Activated CD4-positive, alpha-beta T cell treated with anti-CD3 and anti-CD28 coated beads for 36 hours (primary cell): ENCODE measurements at regions of chr20 and their contacts with region 1.

Region 1: DNA sequence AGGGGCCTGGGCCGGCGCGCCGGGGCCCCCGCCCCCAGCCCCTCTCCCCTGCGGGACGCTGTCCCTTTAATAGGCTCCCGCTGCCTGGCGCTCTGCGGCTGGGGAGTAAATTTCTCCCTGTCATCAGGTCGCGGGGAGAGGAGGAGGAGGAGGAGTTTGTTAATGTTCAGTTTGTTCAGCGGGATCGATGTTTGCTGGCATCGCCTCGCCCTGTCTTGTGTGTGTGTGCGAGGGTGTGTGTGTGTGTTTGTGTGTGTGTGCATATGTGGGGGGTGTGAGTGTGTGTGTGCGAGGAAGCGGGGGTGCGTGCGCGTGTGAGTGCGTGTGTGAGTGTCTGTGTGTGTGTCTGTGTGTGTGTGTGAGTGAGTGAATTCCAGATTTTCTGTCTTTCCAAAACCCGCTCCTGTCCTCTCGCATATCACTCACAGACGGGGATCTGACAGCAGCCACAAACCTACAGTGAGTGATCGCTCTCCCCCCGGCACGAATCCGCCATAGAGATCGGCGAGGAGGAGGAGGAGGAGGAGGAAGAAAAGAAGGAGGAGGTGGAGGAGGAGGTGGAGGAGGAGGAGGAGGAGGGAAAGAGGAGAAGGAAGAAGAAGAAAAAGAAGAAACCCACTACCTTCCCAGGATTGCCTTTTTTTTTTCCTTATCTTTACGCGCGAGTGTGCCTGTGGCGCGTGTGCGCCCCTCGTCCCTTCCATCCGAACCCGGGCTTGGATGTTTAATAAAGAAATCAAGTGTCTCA is at the start of gene TSHZ2:
- DNase-seq: peak; percentile 75
- ATAC-seq: peak; percentile 49
- H3K4me3 Mint-ChIP-seq: peak within 1 kb of the TSS; percentile 79
- H3K27ac Mint-ChIP-seq: peak within 1 kb of the TSS; percentile 94
- H3K4me1 Mint-ChIP-seq: peaks cover 41% of the 10 kb centered on the region
- H3K27me3 Mint-ChIP-seq: peaks cover 8% of the 10 kb centered on the region
- total RNA-seq, gene TSHZ2: 25.9 to 43.6 TPM

Region 2: DNA sequence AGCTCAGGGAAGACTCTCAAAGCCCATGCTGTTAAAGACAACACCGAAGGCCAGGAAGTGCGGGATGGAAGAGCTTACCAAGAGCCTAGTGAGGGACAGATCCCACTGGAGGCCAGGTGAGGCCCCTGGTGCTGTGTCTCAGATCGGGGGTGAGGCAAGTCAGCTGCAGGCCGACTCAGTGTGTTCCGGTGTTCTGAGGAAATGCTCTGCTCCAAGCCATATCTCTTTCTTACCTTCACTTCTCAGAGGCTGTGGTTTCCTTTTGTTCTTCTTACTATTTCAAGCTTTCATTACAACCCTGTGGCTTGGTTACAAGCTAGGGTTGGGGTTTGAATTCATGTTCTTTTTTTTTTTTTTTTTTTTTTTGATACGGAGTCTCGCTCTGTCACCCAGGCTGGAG is 666.5 kb before region 1 on chr20:
- CTCF ChIA-PET with region 1: no interaction called
- POLR2A ChIA-PET with region 1: no interaction called
- intact Hi-C with region 1: loop called in 1 of 2 experiments (anchors 10 kb)
- DNase-seq: peak; percentile 49
- ATAC-seq: peak; percentile 87
- H3K4me3 Mint-ChIP-seq: no peak overlapping the region
- H3K27ac Mint-ChIP-seq: peak overlapping the region; percentile 45
- H3K4me1 Mint-ChIP-seq: peaks cover 56% of the 10 kb centered on the region
- H3K27me3 Mint-ChIP-seq: no peaks in the 10 kb centered on the region

Region 3: DNA sequence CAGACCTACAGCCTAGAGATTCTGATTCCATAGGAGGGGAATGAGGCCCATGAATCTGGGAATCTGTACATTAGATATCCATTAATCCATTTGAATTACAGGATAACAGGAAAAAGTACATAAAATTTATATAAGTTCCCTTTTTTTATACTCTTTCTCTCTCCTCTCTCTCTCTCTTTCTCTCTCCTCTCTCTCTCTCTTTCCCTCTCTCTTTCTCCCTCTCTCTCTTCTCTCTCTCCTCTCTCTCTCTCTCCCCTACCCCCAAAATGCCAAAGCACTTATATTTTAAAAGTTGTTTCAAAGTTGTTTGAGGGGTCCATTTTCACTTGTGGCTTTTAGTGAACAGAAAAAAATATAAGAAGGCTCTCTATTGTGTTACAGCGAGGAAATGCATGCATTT is 14.9 kb after region 1 on chr20:
- CTCF ChIA-PET with region 1: no interaction called
- POLR2A ChIA-PET with region 1: no interaction called
- intact Hi-C with region 1: no loop called
- DNase-seq: no peak
- ATAC-seq: no peak
- H3K4me3 Mint-ChIP-seq: no peak overlapping the region
- H3K27ac Mint-ChIP-seq: no peak overlapping the region
- H3K4me1 Mint-ChIP-seq: peaks cover 20% of the 10 kb centered on the region
- H3K27me3 Mint-ChIP-seq: no peaks in the 10 kb centered on the region

Region 4: GRCh38 chr20:53001498-53002301 is 29.3 kb after region 1 on chr20:
- CTCF ChIA-PET with region 1: interaction called, 4 read pairs
- POLR2A ChIA-PET with region 1: interaction called, 19 read pairs
- intact Hi-C with region 1: loop called (anchors 1 to 2 kb)
- DNase-seq: peak; percentile 49
- ATAC-seq: peak; percentile 72
- H3K4me3 Mint-ChIP-seq: peak overlapping the region; percentile 65
- H3K27ac Mint-ChIP-seq: peak overlapping the region; percentile 99
- H3K4me1 Mint-ChIP-seq: peaks cover 82% of the 10 kb centered on the region
- H3K27me3 Mint-ChIP-seq: no peaks in the 10 kb centered on the region

Region 5: GRCh38 chr20:53070706-53071392 is 98.5 kb after region 1 on chr20:
- CTCF ChIA-PET with region 1: interaction called, 5 read pairs
- POLR2A ChIA-PET with region 1: interaction called, 11 read pairs
- intact Hi-C with region 1: loop called (anchors 1 to 2 kb)
- DNase-seq: peak; percentile 64
- ATAC-seq: peak; percentile 77
- H3K4me3 Mint-ChIP-seq: peak overlapping the region; percentile 24
- H3K27ac Mint-ChIP-seq: peak overlapping the region; percentile 93
- H3K4me1 Mint-ChIP-seq: peaks cover 54% of the 10 kb centered on the region
- H3K27me3 Mint-ChIP-seq: peaks cover 3% of the 10 kb centered on the region

Region 6: GRCh38 chr20:53138454-53139262 is 166.3 kb after region 1 on chr20:
- CTCF ChIA-PET with region 1: no interaction called
- POLR2A ChIA-PET with region 1: no interaction called
- intact Hi-C with region 1: loop called in 1 of 2 experiments (anchors 2 kb)
- DNase-seq: peak; percentile 46
- ATAC-seq: peak; percentile 89
- H3K4me3 Mint-ChIP-seq: no peak overlapping the region
- H3K27ac Mint-ChIP-seq: peak overlapping the region; percentile 69
- H3K4me1 Mint-ChIP-seq: peaks cover 41% of the 10 kb centered on the region
- H3K27me3 Mint-ChIP-seq: peaks cover 4% of the 10 kb centered on the region

Region 7: GRCh38 chr20:53202777-53203176 is 230.4 kb after region 1 on chr20:
- CTCF ChIA-PET with region 1: no interaction called
- POLR2A ChIA-PET with region 1: no interaction called
- intact Hi-C with region 1: loop called in 1 of 2 experiments (anchors 5 kb)
- DNase-seq: no peak
- ATAC-seq: peak; percentile 97
- H3K4me3 Mint-ChIP-seq: no peak overlapping the region
- H3K27ac Mint-ChIP-seq: no peak overlapping the region
- H3K4me1 Mint-ChIP-seq: peaks cover 21% of the 10 kb centered on the region
- H3K27me3 Mint-ChIP-seq: peaks cover 2% of the 10 kb centered on the region

Region 8: GRCh38 chr20:53939572-53940359 is 967.4 kb after region 1 on chr20:
- CTCF ChIA-PET with region 1: no interaction called
- POLR2A ChIA-PET with region 1: no interaction called
- intact Hi-C with region 1: loop called in 1 of 2 experiments (anchors 10 kb)
- DNase-seq: peak; percentile 88
- ATAC-seq: peak; percentile 88
- H3K4me3 Mint-ChIP-seq: no peak overlapping the region
- H3K27ac Mint-ChIP-seq: no peak overlapping the region
- H3K4me1 Mint-ChIP-seq: peaks cover 37% of the 10 kb centered on the region
- H3K27me3 Mint-ChIP-seq: no peaks in the 10 kb centered on the region